Activated CD4-positive, alpha-beta memory T cell treated with anti-CD3 and anti-CD28 coated beads for 36 hours (primary cell): ENCODE measurements at regions of chr14 and their contacts with region 1.

Region 1: DNA sequence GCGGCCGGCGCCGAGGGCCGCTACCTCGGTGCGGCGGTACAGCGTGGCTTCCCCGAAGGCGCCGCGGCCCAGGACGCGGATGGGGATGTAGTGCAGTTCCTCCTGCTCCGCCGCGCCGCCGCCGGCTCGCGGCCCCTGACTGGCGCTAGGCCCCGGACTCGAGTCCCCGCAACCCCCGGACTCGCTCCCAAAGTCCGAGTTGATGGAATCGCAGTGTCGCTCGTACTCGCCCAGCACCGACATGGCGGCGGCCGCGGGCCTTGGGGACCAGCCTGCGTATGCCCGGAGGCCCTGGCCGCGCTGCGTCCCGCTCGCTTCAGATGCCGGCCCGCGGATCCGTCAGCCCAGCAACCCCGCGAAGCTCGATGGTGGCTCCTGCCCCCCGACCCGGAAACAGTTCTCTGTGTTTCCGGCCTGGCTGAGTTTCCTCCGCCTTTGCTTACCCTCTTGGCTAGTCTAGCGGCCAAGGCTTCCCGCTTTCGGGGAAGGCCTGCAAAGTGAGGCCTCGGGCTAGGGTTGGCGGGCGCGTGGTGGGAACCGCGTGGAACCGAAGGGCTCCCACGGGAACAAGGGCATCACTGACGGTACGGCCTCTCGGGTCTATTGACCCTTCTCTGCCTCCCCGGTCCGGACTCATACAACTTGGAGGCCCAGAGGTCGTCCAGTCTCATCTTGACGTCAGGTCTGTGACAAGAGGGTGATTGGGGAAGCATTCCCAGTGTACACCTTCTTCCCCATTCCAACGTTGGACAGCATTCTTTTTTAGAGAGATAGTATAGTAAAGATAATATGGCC is at the start of gene NEK9:
- DNase-seq: peak; percentile 94
- H3K4me3 Mint-ChIP-seq: peak within 1 kb of the TSS; percentile 99
- H3K27ac Mint-ChIP-seq: peak within 1 kb of the TSS; percentile 96
- H3K4me1 Mint-ChIP-seq: peaks cover 43% of the 10 kb centered on the region
- H3K27me3 Mint-ChIP-seq: no peaks in the 10 kb centered on the region
- total RNA-seq, gene NEK9: 51.8 to 56.4 TPM

Region 2: DNA sequence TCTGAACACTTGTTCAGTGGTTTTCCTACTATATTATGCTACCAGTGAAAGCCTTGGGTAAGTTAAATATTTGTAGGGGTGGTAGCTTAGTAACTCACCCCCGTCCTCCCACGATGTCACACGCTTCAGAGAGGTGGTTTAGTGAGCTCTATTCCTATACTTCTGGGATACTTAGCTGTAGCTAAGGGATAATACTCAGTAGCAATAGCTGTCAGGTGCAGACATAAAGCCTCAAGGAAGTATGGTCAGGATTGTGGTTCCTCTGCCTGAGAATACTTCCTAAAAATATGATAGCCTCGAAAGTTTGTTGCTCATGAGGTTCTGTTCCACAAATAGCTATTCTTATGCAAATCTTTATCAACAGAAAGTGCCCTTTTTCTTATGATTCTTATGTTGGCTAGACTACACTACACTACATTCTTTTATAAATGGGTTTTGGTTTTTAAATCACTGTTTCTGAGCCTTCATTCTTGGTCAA is 233.2 kb before region 1 on chr14:
- CTCF ChIA-PET with region 1: no interaction called
- POLR2A ChIA-PET with region 1: no interaction called
- intact Hi-C with region 1: no loop called
- DNase-seq: no peak
- H3K4me3 Mint-ChIP-seq: no peak overlapping the region
- H3K27ac Mint-ChIP-seq: no peak overlapping the region
- H3K4me1 Mint-ChIP-seq: no peaks in the 10 kb centered on the region
- H3K27me3 Mint-ChIP-seq: no peaks in the 10 kb centered on the region

Region 3: GRCh38 chr14:75063407-75064213 is 63.3 kb before region 1 on chr14 and contains the start of gene ACYP1:
- CTCF ChIA-PET with region 1: no interaction called
- POLR2A ChIA-PET with region 1: no interaction called
- intact Hi-C with region 1: loop called (anchors 5 kb)
- DNase-seq: peak; percentile 96
- H3K4me3 Mint-ChIP-seq: peak within 1 kb of the TSS; percentile 99
- H3K27ac Mint-ChIP-seq: peak within 1 kb of the TSS; percentile 95
- H3K4me1 Mint-ChIP-seq: peaks cover 37% of the 10 kb centered on the region
- H3K27me3 Mint-ChIP-seq: no peaks in the 10 kb centered on the region
- total RNA-seq, gene ACYP1: 41.3 to 45.8 TPM

Region 4: DNA sequence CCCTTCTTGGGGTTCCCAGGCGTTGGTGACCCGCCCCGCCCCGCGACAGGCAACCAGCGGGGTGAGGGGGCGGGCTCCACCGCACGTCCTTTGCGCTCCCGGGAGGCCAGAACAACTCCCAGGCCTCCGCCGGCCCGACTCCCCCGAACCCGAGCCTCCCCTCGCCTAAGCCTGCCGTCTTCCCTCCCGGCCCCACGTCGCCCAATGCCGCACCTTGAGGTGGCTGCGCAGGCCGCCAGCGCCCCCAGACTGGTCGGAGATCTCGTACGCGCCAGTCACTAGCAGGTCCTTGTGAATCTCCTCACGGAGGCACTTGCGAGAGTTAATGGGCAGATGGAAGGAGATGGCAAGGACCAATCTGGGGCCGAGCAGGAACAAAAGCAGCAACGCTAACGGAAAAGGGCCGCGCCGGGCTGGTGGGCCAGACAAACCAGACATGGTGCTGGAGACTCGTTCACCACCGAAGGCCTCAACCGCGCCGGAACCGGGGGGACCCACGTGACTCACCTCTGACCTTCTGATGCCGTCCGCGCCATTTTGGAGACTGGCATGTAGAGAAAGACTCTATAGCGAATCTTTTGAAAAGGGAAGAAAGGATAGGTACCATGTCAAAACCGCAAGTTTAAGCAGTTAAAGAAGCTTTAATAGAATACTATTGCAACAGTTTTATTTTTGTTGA is 49.4 kb after region 1 on chr14 and contains the start of gene TMED10:
- CTCF ChIA-PET with region 1: no interaction called
- POLR2A ChIA-PET with region 1: interaction called, 3 read pairs
- intact Hi-C with region 1: loop called (anchors 2 kb)
- DNase-seq: peak; percentile 94
- H3K4me3 Mint-ChIP-seq: peak within 1 kb of the TSS; percentile 86
- H3K27ac Mint-ChIP-seq: peak within 1 kb of the TSS; percentile 98
- H3K4me1 Mint-ChIP-seq: peaks cover 42% of the 10 kb centered on the region
- H3K27me3 Mint-ChIP-seq: no peaks in the 10 kb centered on the region
- total RNA-seq, gene TMED10: 189 to 201 TPM

Region 5: GRCh38 chr14:75198291-75198933 is 71.5 kb after region 1 on chr14:
- CTCF ChIA-PET with region 1: no interaction called
- POLR2A ChIA-PET with region 1: no interaction called
- intact Hi-C with region 1: no loop called
- DNase-seq: no peak
- H3K4me3 Mint-ChIP-seq: no peak overlapping the region
- H3K27ac Mint-ChIP-seq: no peak overlapping the region
- H3K4me1 Mint-ChIP-seq: no peaks in the 10 kb centered on the region
- H3K27me3 Mint-ChIP-seq: no peaks in the 10 kb centered on the region

Region 6: GRCh38 chr14:75293920-75294642 is 167.2 kb after region 1 on chr14:
- CTCF ChIA-PET with region 1: interaction called, 280 read pairs
- POLR2A ChIA-PET with region 1: interaction called, 8 read pairs
- intact Hi-C with region 1: loop called (anchors 1 kb)
- DNase-seq: peak; percentile 96
- H3K4me3 Mint-ChIP-seq: peak overlapping the region; percentile 79
- H3K27ac Mint-ChIP-seq: peak overlapping the region; percentile 67
- H3K4me1 Mint-ChIP-seq: peaks cover 20% of the 10 kb centered on the region
- H3K27me3 Mint-ChIP-seq: no peaks in the 10 kb centered on the region

Region 7: GRCh38 chr14:75566321-75566720 is 439.4 kb after region 1 on chr14:
- CTCF ChIA-PET with region 1: interaction called, 4 read pairs
- POLR2A ChIA-PET with region 1: interaction called, 4 read pairs
- intact Hi-C with region 1: loop called (anchors 5 kb)
- DNase-seq: peak; percentile 94
- H3K4me3 Mint-ChIP-seq: peak overlapping the region; percentile 72
- H3K27ac Mint-ChIP-seq: peak overlapping the region; percentile 93
- H3K4me1 Mint-ChIP-seq: peaks cover 90% of the 10 kb centered on the region
- H3K27me3 Mint-ChIP-seq: no peaks in the 10 kb centered on the region